Caco-2 (cell line): ENCODE measurements at regions of chr10 and their contacts with region 1.

Region 1: DNA sequence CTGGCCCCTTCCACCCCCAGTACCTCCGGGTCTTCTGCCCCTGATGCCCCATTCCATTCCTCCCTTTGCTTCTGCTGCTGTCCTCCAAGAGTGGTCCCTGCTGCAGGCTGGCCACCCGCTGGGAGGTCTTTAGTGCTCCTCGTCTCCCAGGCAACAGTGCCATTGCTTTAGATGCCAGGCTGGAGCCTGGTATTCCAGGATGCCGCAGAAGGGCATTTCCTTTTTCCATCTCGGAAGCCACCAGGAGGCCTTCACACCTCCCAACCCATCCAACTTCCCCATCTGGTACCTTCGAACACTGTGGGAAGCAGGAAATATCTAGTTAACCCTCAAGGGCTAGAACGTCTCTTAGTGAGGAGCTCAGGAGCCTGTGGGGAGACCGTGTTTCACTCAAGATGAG is 92.9 kb upstream of the DUSP5 start:
- DNase-seq: no peak
- H3K4me3 ChIP-seq: no peak overlapping the region
- H3K4me3 Mint-ChIP-seq: no peak overlapping the region
- H3K27ac Mint-ChIP-seq: no peak overlapping the region
- H3K4me1 ChIP-seq: peaks cover 62% of the 10 kb centered on the region
- H3K4me1 Mint-ChIP-seq: peaks cover 30% of the 10 kb centered on the region
- H3K27me3 ChIP-seq: no peaks in the 10 kb centered on the region
- H3K27me3 Mint-ChIP-seq: no peaks in the 10 kb centered on the region
- CTCF ChIP-seq: no peak

Region 2: GRCh38 chr10:110487411-110488123 is 82.7 kb after region 1 on chr10:
- CTCF ChIA-PET with region 1: no interaction called
- POLR2A ChIA-PET with region 1: interaction called, 13 read pairs
- intact Hi-C with region 1: no loop called
- DNase-seq: peak; percentile 57 to 73
- H3K4me3 ChIP-seq: no peak overlapping the region
- H3K4me3 Mint-ChIP-seq: peak overlapping the region; percentile 56
- H3K27ac Mint-ChIP-seq: peak overlapping the region; percentile 77
- H3K4me1 ChIP-seq: peaks cover 43% of the 10 kb centered on the region
- H3K4me1 Mint-ChIP-seq: peaks cover 20% of the 10 kb centered on the region
- H3K27me3 ChIP-seq: no peaks in the 10 kb centered on the region
- H3K27me3 Mint-ChIP-seq: no peaks in the 10 kb centered on the region
- CTCF ChIP-seq: no peak

Region 3: DNA sequence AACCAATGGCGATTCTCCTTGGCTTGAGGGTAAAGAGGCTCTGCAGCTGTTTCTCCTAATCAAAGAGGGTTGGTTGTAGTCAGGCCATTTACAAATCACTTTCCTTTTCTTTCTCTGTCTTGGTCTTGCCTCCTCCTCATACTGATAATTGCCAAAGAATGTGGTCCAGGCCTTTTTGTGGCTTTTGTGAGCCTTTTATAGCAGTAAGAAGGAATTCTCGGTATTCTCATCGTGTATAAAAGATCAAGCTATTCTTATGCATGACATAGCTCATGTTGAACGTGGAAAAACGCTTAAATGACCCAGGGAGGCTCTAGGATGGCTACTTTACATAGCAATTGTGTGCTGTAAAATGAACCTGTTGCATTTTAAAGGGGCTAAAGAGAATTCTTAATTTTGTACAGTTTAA is 301.9 kb after region 1 on chr10:
- CTCF ChIA-PET with region 1: no interaction called
- POLR2A ChIA-PET with region 1: no interaction called
- intact Hi-C with region 1: no loop called
- DNase-seq: no peak
- H3K4me3 ChIP-seq: no peak overlapping the region
- H3K4me3 Mint-ChIP-seq: no peak overlapping the region
- H3K27ac Mint-ChIP-seq: no peak overlapping the region
- H3K4me1 ChIP-seq: peaks cover 3% of the 10 kb centered on the region; the same call in 1 of the 2 replicates
- H3K4me1 Mint-ChIP-seq: peaks cover 6% of the 10 kb centered on the region
- H3K27me3 ChIP-seq: no peaks in the 10 kb centered on the region
- H3K27me3 Mint-ChIP-seq: no peaks in the 10 kb centered on the region
- CTCF ChIP-seq: no peak